Spleen (tissue), 13 donors: ENCODE measurements at regions of chr4 and their contacts with region 1.

Region 1: DNA sequence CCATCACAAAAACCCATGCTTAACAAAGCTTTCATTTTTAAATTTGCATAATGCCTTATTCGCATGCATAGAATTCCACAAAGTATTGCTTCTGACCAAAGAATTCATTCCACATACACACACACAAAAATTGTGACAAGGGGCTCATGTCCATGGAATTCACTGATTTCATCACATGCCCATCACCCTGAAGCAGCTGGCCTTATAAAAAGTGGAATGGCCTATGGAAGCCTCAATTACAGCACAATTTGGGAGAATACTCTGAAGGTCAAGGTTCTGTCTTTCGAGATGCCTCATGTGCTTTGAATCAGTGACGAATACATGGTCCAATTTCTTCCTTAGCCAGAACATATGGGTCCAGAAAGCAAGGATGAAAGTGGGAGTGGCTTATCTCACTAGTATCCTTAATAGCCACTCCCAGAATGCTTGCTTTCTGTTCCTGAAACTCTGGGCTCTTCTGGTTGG is 165.7 kb downstream of the KDR start:
- DNase-seq: no peak
- H3K4me3 ChIP-seq: no peak overlapping the region
- H3K27ac ChIP-seq: no peak overlapping the region
- H3K4me1 ChIP-seq: peaks cover 0 to 6% (median 0%) of the 10 kb centered on the region in 6 donors
- H3K27me3 ChIP-seq: no peaks in the 10 kb centered on the region
- CTCF ChIP-seq: no peak
- POLR2A ChIP-seq: no peak

Region 2: GRCh38 chr4:54322818-54323417 is 636.8 kb before region 1 on chr4:
- intact Hi-C with region 1: loop called (anchors 5 kb)
- DNase-seq: no peak
- H3K4me3 ChIP-seq: no peak overlapping the region
- H3K27ac ChIP-seq: no peak overlapping the region
- H3K4me1 ChIP-seq: peaks cover 0 to 7% (median 1%) of the 10 kb centered on the region in 6 donors
- H3K27me3 ChIP-seq: no peaks in the 10 kb centered on the region
- CTCF ChIP-seq: peak in 8 of 11 experiments; percentile 43 to 75 (median 62)
- POLR2A ChIP-seq: no peak